WTC11 (cell line): ENCODE measurements at regions of chr21 and their contacts with region 1.

Region 1: GRCh38 chr21:46239869-46240268 is 11.3 kb upstream of the LSS start:
- DNase-seq: no peak
- ATAC-seq: no peak
- H3K4me3 Mint-ChIP-seq: no peak overlapping the region
- H3K27ac Mint-ChIP-seq: peak overlapping the region; percentile 49; the same call in 1 of the 2 replicates
- H3K4me1 Mint-ChIP-seq: peaks cover 2% of the 10 kb centered on the region; the same call in 1 of the 2 replicates
- H3K27me3 Mint-ChIP-seq: no peaks in the 10 kb centered on the region
- CTCF ChIP-seq: no peak

Region 2: DNA sequence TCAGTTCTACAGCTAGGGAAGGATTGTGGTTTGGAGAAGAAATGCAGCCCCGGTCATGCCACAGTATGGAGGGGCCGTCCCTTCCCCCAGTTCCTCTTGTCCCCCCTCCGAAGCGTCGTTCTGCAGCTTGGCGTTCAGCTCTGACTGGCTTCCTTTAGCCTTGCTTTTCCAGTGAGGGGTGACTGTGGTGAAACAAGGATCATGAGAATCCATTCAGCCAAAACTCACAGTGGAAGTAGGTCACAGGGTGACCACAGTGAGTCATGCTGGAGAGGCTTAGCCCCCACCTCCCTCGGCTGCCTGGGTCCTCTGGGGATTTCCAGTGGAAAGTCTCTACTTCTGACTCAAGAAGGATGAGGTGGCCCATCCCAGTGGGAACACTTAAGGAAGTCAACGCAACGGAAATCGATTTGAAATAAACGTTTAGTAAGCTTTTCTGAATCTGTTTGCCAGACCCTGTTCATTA is 179.2 kb before region 1 on chr21:
- CTCF ChIA-PET with region 1: no interaction called
- POLR2A ChIA-PET with region 1: no interaction called
- DNase-seq: no peak
- ATAC-seq: no peak
- H3K4me3 Mint-ChIP-seq: no peak overlapping the region
- H3K27ac Mint-ChIP-seq: no peak overlapping the region
- H3K4me1 Mint-ChIP-seq: peaks cover 6% of the 10 kb centered on the region
- H3K27me3 Mint-ChIP-seq: peaks cover 15% of the 10 kb centered on the region
- CTCF ChIP-seq: no peak

Region 3: DNA sequence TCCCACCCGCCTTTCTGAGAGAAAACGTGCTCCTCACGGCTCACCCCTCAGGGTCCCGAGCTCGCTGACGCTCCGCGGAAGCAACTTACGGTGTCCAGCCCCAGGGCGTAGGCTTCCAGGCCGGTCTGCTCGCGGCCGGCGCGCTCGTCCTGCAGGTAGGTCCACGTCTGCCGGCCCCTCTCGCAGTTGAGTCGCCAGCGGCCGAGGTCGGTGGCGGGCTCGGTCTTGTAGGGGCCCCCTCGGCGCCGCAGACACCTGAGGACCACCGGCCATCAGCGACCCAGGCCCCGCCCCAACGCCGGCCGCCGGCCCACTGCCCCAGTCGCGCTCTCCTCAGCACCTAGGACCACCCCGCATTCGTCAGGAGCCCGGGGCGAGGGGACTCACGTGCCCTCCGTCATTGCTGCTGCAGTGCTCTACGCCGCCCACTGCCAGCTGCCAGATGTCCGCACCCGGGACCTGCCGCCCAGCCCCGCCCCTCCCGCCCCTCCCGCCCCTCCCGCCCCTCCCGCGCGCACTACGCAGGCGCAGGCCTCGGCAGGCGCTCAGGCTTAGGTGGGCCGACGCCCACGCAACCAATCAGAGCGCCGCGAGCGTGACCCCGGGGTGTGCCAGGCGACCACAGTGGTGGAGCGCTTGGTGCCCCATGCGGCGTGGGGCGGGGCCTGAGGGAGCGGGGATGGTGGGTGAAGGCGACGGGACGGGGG is 11.4 kb before region 1 on chr21 and contains the start of gene LSS:
- CTCF ChIA-PET with region 1: interaction called, 11 read pairs
- POLR2A ChIA-PET with region 1: no interaction called
- DNase-seq: peak; percentile 99
- ATAC-seq: peak; percentile 97
- H3K4me3 Mint-ChIP-seq: peak within 1 kb of the TSS; percentile 89
- H3K27ac Mint-ChIP-seq: peak within 1 kb of the TSS; percentile 99
- H3K4me1 Mint-ChIP-seq: peaks cover 27% of the 10 kb centered on the region
- H3K27me3 Mint-ChIP-seq: peaks cover 22% of the 10 kb centered on the region
- CTCF ChIP-seq: no peak
- total RNA-seq, gene LSS: 79.9 to 101 TPM (median 92.6 TPM) in 3 replicates